Endothelial cell of umbilical vein (primary cell): ENCODE measurements at regions of chr12 and their contacts with region 1.

Region 1: DNA sequence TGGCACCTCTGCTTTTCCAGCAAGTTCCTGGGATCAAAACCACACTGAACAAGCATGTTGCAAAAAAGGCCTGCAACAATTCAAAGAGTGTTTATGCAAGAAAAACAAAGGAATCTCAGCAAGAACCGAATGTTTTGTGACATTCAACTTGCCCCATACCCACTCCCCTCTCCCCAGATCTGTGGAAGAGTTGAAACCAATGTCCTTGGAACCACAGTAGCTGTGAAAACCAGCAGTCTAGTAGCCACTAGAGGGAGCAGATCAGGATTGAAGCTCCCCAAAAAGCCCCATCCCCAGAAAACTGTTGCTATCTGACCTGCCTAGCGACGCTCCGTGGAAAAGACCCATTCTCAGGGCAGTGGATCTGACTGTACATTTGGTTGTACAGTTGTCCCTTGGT is 27.1 kb downstream of the PRKAB1 start:
- DNase-seq: no peak
- H3K4me3 ChIP-seq: no peak overlapping the region
- H3K27ac ChIP-seq: no peak overlapping the region
- H3K4me1 ChIP-seq: peaks cover 30% of the 10 kb centered on the region
- H3K27me3 ChIP-seq: no peaks in the 10 kb centered on the region
- CTCF ChIP-seq: peak; percentile 47 to 65
- POLR2A ChIP-seq: no peak

Region 2: DNA sequence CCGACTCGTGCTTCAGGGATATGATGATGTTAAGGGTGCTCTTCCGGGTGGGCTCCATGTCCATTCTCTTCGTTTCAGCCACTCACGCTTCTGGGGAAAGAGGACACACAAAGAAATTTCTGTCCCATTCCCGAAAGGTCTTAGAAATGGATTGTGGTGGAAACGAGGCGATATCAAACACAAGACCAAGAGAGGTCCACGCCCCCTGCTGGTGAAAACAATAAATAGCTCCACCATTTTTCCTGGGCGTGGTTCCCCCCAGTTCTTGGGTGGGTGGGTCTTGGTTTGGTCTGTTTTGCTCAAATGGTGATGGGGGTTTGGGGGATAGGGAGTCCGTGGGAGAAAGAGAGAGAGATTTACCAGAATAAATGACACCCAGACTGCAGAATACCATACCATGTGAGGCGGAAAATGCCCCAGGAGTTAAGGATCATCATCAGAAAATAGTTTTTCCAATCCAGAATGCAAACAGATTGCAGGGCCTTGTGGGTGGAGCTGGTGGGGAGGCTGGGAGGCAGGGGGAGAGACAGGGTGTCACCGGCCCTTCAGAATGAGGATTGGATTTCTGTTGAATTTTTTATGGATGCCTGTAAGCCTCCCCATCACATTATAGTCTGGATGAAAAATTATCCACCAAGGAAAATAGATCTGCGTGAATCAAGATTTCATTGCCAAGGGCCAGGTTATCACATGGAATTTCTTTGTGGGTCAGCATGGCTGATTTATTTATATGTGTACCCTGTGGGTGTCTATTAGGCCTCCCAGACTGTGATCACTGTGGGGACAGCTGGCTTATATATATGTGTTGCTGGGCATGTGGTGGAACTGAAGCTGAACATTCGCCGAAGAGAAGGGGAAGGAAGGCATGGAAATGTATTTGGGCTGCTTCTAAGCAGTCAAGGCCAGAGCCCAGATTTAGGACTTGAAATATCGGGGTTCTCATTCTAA is 657.9 kb before region 1 on chr12:
- CTCF ChIA-PET with region 1: no interaction called
- POLR2A ChIA-PET with region 1: no interaction called
- dilution Hi-C with region 1: no loop called
- intact Hi-C with region 1: no loop called
- DNase-seq: no peak
- H3K4me3 ChIP-seq: no peak overlapping the region
- H3K27ac ChIP-seq: no peak overlapping the region
- H3K4me1 ChIP-seq: no peaks in the 10 kb centered on the region
- H3K27me3 ChIP-seq: no peaks in the 10 kb centered on the region
- CTCF ChIP-seq: peak; percentile 34 to 40
- POLR2A ChIP-seq: no peak

Region 3: DNA sequence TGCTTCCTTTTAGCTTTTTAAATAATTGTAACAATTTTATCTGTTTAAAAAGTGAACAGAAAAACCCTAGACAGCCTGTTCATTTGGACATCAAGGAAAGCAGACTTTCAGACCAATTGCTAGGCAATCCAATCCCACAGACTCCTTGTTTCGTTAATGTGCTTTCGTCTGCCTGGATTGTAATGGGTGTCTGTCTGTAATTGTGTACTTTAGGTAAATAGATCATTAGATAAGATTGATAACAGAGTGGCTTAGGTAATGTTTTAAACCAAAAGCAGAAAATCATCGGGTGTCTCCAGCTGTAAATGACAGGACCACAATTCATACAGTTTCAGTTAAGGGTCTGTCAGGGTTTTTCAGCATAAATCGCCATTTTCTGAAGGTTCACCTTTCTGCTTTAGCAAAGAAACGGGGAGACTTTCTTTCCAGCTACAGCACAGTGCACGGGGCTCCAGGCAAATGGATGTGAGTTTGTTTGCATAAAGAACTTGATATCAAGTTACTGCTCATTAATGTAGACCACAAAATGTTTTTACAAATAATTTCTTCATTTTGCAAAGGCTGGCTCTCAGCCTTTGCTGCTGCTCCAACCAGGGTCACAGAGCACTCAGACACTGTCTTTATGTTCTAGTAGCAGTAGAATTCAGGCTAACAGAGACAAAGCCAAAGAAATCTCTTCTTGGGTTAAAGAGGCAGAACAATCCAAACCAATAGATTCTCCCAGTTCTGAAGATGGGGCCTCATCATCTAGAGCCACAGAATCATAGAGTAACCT is 340.7 kb before region 1 on chr12:
- CTCF ChIA-PET with region 1: no interaction called
- POLR2A ChIA-PET with region 1: no interaction called
- dilution Hi-C with region 1: no loop called
- intact Hi-C with region 1: no loop called
- DNase-seq: no peak
- H3K4me3 ChIP-seq: no peak overlapping the region
- H3K27ac ChIP-seq: no peak overlapping the region
- H3K4me1 ChIP-seq: no peaks in the 10 kb centered on the region
- H3K27me3 ChIP-seq: no peaks in the 10 kb centered on the region
- CTCF ChIP-seq: no peak
- POLR2A ChIP-seq: no peak

Region 4: GRCh38 chr12:119667577-119668323 is 27.3 kb before region 1 on chr12 and contains the start of gene PRKAB1:
- CTCF ChIA-PET with region 1: interaction called, 7 read pairs
- POLR2A ChIA-PET with region 1: no interaction called
- dilution Hi-C with region 1: no loop called
- intact Hi-C with region 1: loop called (anchors 1 kb)
- DNase-seq: peak; percentile 93
- H3K4me3 ChIP-seq: peak within 1 kb of the TSS; percentile 69 to 84 (median 76)
- H3K27ac ChIP-seq: peak within 1 kb of the TSS; percentile 32
- H3K4me1 ChIP-seq: peaks cover 26% of the 10 kb centered on the region
- H3K27me3 ChIP-seq: no peaks in the 10 kb centered on the region
- CTCF ChIP-seq: peak; percentile 90 to 98
- POLR2A ChIP-seq: peak; percentile 46
- total RNA-seq, gene PRKAB1: 21.9 and 23.1 TPM in 2 replicates

Region 5: GRCh38 chr12:119673634-119674033 is 21.4 kb before region 1 on chr12:
- CTCF ChIA-PET with region 1: interaction called, 6 read pairs
- POLR2A ChIA-PET with region 1: no interaction called
- dilution Hi-C with region 1: no loop called
- intact Hi-C with region 1: loop called (anchors 1 kb)
- DNase-seq: peak; percentile 85
- H3K4me3 ChIP-seq: no peak overlapping the region
- H3K27ac ChIP-seq: peak overlapping the region; percentile 63
- H3K4me1 ChIP-seq: peaks cover 28% of the 10 kb centered on the region
- H3K27me3 ChIP-seq: no peaks in the 10 kb centered on the region
- CTCF ChIP-seq: no peak
- POLR2A ChIP-seq: peak; percentile 75

Region 6: DNA sequence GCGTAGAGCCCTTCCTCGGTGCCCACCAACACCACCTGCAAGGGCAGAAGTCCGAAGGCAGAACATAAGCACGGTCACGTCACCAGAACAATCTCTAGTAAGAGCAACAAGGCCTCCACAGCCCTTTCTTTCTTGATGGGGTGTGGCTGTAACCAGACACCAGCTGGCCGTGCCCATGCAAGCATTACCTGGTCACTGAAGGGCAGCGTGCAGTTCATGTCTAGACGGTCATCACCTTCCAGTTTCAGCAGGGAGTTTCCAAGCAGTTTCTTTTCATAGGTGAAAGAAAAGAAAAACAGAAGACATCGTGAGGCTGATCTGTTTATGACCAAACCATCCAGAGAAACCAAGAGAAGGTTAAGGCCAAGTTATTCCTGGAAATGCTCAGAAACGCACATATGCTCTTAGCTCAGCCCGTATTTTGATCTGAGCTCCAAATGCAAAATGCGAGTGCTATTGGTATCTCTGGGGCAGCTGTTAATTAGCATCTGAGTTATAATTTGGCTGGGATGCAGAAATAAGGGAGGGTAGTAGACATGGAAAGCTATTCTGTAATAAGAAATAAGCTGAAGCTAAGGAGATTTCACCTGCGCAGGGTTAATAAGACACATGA is 15.4 kb after region 1 on chr12:
- CTCF ChIA-PET with region 1: interaction called, 11 read pairs
- POLR2A ChIA-PET with region 1: interaction called, 4 read pairs
- dilution Hi-C with region 1: no loop called
- intact Hi-C with region 1: loop called (anchors 2 kb)
- DNase-seq: no peak
- H3K4me3 ChIP-seq: no peak overlapping the region
- H3K27ac ChIP-seq: no peak overlapping the region
- H3K4me1 ChIP-seq: peaks cover 4% of the 10 kb centered on the region
- H3K27me3 ChIP-seq: no peaks in the 10 kb centered on the region
- CTCF ChIP-seq: no peak
- POLR2A ChIP-seq: no peak

Region 7: GRCh38 chr12:119727600-119728443 is 32.8 kb after region 1 on chr12:
- CTCF ChIA-PET with region 1: interaction called, 17 read pairs
- POLR2A ChIA-PET with region 1: no interaction called
- dilution Hi-C with region 1: no loop called
- intact Hi-C with region 1: no loop called
- DNase-seq: no peak
- H3K4me3 ChIP-seq: no peak overlapping the region
- H3K27ac ChIP-seq: no peak overlapping the region
- H3K4me1 ChIP-seq: no peaks in the 10 kb centered on the region
- H3K27me3 ChIP-seq: no peaks in the 10 kb centered on the region
- CTCF ChIP-seq: no peak
- POLR2A ChIP-seq: no peak

Region 8: GRCh38 chr12:119788783-119789182 is 93.7 kb after region 1 on chr12:
- CTCF ChIA-PET with region 1: no interaction called
- POLR2A ChIA-PET with region 1: no interaction called
- dilution Hi-C with region 1: no loop called
- intact Hi-C with region 1: no loop called
- DNase-seq: no peak
- H3K4me3 ChIP-seq: no peak overlapping the region
- H3K27ac ChIP-seq: no peak overlapping the region
- H3K4me1 ChIP-seq: no peaks in the 10 kb centered on the region
- H3K27me3 ChIP-seq: no peaks in the 10 kb centered on the region
- CTCF ChIP-seq: no peak
- POLR2A ChIP-seq: no peak